K562 (cell line): ENCODE measurements at regions of chr13 and their contacts with region 1.

Region 1: GRCh38 chr13:52128714-52129700 is at the start of gene NEK5:
- DNase-seq: peak; percentile 70 to 78 (median 74)
- ATAC-seq: peak; percentile 94
- H3K4me3 ChIP-seq: peak within 1 kb of the TSS; percentile 64
- H3K27ac ChIP-seq: no peak within 1 kb of the TSS
- H3K4me1 ChIP-seq: peaks cover 22% of the 10 kb centered on the region in 2 experiments; a peak in 4 of 5 replicates
- H3K27me3 ChIP-seq: no peaks in the 10 kb centered on the region
- CTCF ChIP-seq: peak; percentile 73 to 81 (median 74)
- EP300 ChIP-seq: no peak
- POLR2A ChIP-seq: no peak
- RAD21 ChIP-seq: peak; percentile 79 to 84
- polyA plus RNA-seq, gene NEK5: 0.27 to 0.30 TPM

Region 2: GRCh38 chr13:51435002-51435578 is 693.9 kb before region 1 on chr13:
- CTCF ChIA-PET with region 1: no interaction called
- POLR2A ChIA-PET with region 1: no interaction called
- in situ Hi-C with region 1: loop called (anchors 25 kb)
- intact Hi-C with region 1: no loop called
- DNase-seq: no peak
- ATAC-seq: no peak
- H3K4me3 ChIP-seq: no peak overlapping the region
- H3K27ac ChIP-seq: no peak overlapping the region
- H3K4me1 ChIP-seq: no peaks in the 10 kb centered on the region; a peak in 1 of 5 replicates
- H3K27me3 ChIP-seq: no peaks in the 10 kb centered on the region
- CTCF ChIP-seq: peak in 2 of 3 experiments; percentile 20 to 58; a peak in 3 of 6 replicates
- EP300 ChIP-seq: no peak
- POLR2A ChIP-seq: no peak
- RAD21 ChIP-seq: peak; percentile 28 to 55; a peak in 2 of 4 replicates

Region 3: DNA sequence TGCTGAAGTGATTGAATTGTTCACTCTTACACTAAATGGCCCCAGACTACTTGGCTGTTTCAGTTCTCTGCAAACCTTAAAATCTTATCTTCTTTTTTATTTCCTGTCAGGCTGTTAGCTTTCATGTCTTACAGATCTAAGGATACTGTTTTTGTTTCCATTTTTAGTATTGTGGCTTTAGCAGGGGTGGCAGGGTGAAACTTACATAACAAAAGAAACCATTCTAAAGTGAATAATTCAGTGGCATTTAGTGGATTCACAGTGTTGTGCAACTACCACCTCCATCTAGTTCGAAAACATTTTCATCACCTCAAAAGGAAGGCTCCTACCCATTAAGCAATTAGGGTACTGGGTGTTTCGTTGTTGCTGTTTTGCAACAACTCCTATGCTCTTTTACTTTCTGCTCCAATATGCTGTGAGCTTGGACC is 303.8 kb before region 1 on chr13:
- CTCF ChIA-PET with region 1: no interaction called
- POLR2A ChIA-PET with region 1: no interaction called
- in situ Hi-C with region 1: loop called (anchors 10 kb)
- intact Hi-C with region 1: no loop called
- DNase-seq: no peak
- ATAC-seq: no peak
- H3K4me3 ChIP-seq: no peak overlapping the region
- H3K27ac ChIP-seq: no peak overlapping the region
- H3K4me1 ChIP-seq: no peaks in the 10 kb centered on the region; a peak in 1 of 5 replicates
- H3K27me3 ChIP-seq: peaks cover 3 to 33% of the 10 kb centered on the region in 2 experiments; a peak in 4 of 5 replicates
- CTCF ChIP-seq: no peak
- EP300 ChIP-seq: no peak
- POLR2A ChIP-seq: no peak
- RAD21 ChIP-seq: no peak

Region 4: DNA sequence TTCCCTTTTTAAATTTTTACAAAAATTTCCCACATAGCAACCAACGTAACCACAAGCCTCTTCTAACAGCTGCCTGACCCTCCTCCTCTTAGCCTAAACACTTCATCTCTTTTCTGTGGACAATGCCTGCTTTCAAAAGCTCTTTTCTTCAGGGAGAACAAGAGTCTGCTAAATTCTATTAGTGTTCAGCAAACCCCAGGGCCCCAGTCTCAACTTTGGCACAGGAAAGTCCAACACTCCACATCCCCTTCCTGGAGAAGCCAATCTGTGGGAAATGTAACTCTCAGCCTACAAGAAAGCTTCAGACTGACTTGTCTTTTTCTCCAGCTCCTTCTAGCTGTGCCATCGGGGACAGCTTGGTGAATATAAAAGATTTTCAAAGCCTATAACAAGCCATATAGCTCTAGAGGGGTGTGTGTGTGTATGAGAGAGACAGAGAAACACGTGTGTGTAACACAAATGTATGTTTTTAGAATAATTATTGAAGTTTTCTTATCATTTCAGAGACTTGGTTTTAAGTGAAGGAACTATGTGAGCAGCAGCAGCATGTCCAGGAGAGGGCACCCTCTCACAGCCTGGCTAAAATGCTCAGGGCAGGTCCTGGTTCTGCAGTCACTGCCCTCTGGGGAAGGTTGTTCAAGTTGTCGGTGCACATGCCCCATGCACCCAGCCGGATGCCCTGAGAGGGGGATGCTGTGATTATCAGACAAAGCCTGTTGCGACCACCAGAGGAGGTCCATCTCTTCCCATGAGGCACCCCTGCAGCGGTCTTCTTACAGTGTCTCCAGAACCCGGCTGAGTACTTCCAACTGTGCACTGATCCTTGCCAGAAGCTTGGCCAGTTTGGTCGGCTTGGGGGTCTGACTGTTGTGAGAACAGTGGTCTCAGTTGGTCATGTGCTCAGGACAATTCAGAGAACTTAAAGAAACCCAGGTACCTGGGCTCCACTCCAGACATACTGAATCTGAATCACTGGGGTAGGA is 232.8 kb before region 1 on chr13:
- CTCF ChIA-PET with region 1: interaction called, 27 read pairs
- POLR2A ChIA-PET with region 1: no interaction called
- in situ Hi-C with region 1: loop called (anchors 10 kb)
- intact Hi-C with region 1: loop called (anchors 1 kb)
- DNase-seq: peak; percentile 48 to 68 (median 55)
- ATAC-seq: peak; percentile 98
- H3K4me3 ChIP-seq: no peak overlapping the region
- H3K27ac ChIP-seq: no peak overlapping the region
- H3K4me1 ChIP-seq: no peaks in the 10 kb centered on the region; a peak in 2 of 5 replicates
- H3K27me3 ChIP-seq: no peaks in the 10 kb centered on the region
- CTCF ChIP-seq: peak; percentile 77 to 88 (median 78)
- EP300 ChIP-seq: no peak
- POLR2A ChIP-seq: no peak
- RAD21 ChIP-seq: peak; percentile 85 to 87

Region 5: DNA sequence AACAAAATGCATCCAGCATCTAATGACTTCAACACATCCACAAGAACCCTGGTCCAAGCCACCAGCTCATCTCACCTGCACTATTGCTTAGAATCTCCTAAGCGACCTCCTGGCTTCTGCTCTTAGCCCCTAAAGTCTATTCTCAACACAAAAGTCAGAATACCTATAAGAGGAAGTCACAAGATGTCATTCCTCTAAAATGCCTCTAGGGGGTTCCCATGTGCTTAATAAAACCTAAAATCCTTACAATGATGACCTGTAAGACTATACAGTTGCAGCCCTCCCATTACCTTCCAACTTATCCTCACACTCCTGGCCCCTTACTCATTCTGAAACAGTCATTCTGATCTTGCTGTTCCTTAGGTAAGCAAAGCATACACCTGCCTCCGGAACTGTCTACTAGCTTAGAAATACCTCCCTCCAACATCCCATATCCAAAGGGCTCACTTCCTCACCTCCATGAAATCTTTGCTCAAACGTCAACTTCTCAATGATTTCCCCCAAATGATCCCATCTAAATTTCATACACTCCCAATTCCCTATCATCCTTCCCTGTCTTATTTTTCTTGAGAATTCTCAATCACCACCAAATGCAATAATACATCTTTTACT is 127.8 kb before region 1 on chr13:
- CTCF ChIA-PET with region 1: interaction called, 6 read pairs
- POLR2A ChIA-PET with region 1: no interaction called
- in situ Hi-C with region 1: loop called (anchors 5 kb)
- intact Hi-C with region 1: loop called (anchors 1 kb)
- DNase-seq: peak; percentile 32 to 49 (median 42)
- ATAC-seq: peak; percentile 45
- H3K4me3 ChIP-seq: no peak overlapping the region
- H3K27ac ChIP-seq: no peak overlapping the region
- H3K4me1 ChIP-seq: peaks cover 31 to 43% of the 10 kb centered on the region in 2 experiments
- H3K27me3 ChIP-seq: no peaks in the 10 kb centered on the region
- CTCF ChIP-seq: peak; percentile 36 to 67 (median 53); a peak in 4 of 6 replicates
- EP300 ChIP-seq: no peak
- POLR2A ChIP-seq: no peak
- RAD21 ChIP-seq: peak; percentile 49 to 73